Calu3 (cell line): ENCODE measurements at regions of chr11 and their contacts with region 1.

Region 1: DNA sequence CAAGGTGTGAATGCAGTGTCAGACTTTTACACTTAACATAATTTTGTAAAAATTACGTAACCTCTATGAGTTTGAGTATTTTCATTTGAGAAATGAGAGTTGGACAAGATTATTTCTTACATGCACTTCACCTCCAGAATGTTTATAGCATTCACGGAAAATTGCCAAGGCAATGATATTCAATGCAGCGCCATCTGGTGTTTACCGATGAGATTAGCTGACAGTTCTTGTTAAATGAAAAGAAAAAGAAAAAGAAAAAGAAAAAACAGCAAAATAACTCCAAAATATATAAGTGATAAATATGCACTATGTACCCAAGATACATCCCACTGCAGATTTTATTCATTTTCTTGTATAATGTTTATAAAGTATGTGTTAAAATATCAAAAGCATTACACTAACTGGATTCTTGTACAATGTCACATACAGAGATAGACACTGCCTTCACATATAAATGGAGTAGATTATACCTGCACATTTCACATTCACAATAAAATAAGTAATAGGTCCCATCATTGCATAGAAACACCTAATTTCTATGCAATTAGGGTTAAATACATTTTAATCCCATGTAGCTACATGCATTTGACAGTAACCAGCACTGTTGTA is 976.3 kb upstream of the FAT3 start:
- DNase-seq: peak; percentile 40
- H3K4me3 Mint-ChIP-seq: no peak overlapping the region
- H3K27ac Mint-ChIP-seq: no peak overlapping the region
- H3K4me1 Mint-ChIP-seq: no peaks in the 10 kb centered on the region
- H3K27me3 Mint-ChIP-seq: no peaks in the 10 kb centered on the region
- CTCF ChIP-seq: peak; percentile 40

Region 2: GRCh38 chr11:90476442-90477007 is 771.8 kb before region 1 on chr11:
- CTCF ChIA-PET with region 1: no interaction called
- intact Hi-C with region 1: loop called (anchors 5 kb)
- DNase-seq: peak; percentile 52
- H3K4me3 Mint-ChIP-seq: no peak overlapping the region
- H3K27ac Mint-ChIP-seq: no peak overlapping the region
- H3K4me1 Mint-ChIP-seq: no peaks in the 10 kb centered on the region
- H3K27me3 Mint-ChIP-seq: no peaks in the 10 kb centered on the region
- CTCF ChIP-seq: no peak

Region 3: DNA sequence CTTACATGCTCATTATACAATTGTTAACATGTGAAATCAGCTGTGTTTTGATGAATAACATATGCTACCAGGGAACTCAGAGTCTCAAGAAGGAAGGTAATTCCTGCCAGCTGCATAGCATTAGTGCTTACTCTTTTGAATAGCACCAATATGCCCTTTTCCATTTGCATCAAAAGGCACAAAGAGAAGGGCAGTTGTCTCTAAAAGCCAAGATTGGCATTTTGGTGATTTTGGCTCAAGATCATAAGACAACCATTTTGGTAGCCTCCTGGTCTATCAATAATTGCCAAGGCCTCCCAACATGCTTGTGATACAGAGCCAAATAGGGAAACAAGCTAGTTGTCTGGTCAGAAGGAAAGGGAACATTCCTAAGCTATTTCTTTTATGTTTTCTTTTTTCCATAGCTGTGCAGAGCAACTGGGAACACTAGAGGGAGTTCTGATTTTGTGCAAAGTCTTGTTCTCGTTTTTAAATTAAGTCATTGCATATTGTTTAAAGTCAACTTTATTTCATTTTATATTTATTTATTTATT is 608.8 kb before region 1 on chr11:
- CTCF ChIA-PET with region 1: no interaction called
- intact Hi-C with region 1: loop called (anchors 5 kb)
- DNase-seq: peak; percentile 3
- H3K4me3 Mint-ChIP-seq: no peak overlapping the region
- H3K27ac Mint-ChIP-seq: no peak overlapping the region
- H3K4me1 Mint-ChIP-seq: no peaks in the 10 kb centered on the region
- H3K27me3 Mint-ChIP-seq: no peaks in the 10 kb centered on the region
- CTCF ChIP-seq: no peak

Region 4: DNA sequence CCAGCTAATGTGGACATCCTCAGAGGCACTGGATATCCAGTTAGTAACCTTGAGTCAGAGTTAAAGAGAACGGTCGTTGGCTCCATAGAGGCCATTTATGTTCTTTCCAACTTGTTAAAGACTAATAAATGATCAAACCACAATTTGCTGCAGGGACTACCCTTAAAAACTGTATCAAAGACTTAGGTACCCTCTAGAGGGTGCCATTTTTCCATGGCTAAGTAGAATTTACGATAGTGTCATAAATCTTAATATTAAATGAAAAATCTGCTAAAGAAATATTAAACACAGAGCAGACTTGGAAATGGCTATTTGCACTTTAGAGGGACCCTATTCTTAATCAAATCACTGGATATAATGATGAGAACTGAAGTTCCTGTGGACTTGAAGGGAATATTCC is 340.2 kb before region 1 on chr11:
- CTCF ChIA-PET with region 1: no interaction called
- intact Hi-C with region 1: loop called (anchors 5 kb)
- DNase-seq: no peak
- H3K4me3 Mint-ChIP-seq: no peak overlapping the region
- H3K27ac Mint-ChIP-seq: no peak overlapping the region
- H3K4me1 Mint-ChIP-seq: peaks cover 7% of the 10 kb centered on the region
- H3K27me3 Mint-ChIP-seq: no peaks in the 10 kb centered on the region
- CTCF ChIP-seq: no peak